Left ventricle myocardium inferior (tissue), 1 donor: ENCODE measurements at regions of chr13 and their contacts with region 1.

Region 1: GRCh38 chr13:51286135-51287002 is 53.1 kb upstream of the SERPINE3 start:
- DNase-seq: peak; percentile 79
- H3K4me3 ChIP-seq: no peak overlapping the region
- H3K27ac ChIP-seq: no peak overlapping the region
- H3K4me1 ChIP-seq: peaks cover 21% of the 10 kb centered on the region
- H3K27me3 ChIP-seq: no peaks in the 10 kb centered on the region
- CTCF ChIP-seq: peak; percentile 97

Region 2: DNA sequence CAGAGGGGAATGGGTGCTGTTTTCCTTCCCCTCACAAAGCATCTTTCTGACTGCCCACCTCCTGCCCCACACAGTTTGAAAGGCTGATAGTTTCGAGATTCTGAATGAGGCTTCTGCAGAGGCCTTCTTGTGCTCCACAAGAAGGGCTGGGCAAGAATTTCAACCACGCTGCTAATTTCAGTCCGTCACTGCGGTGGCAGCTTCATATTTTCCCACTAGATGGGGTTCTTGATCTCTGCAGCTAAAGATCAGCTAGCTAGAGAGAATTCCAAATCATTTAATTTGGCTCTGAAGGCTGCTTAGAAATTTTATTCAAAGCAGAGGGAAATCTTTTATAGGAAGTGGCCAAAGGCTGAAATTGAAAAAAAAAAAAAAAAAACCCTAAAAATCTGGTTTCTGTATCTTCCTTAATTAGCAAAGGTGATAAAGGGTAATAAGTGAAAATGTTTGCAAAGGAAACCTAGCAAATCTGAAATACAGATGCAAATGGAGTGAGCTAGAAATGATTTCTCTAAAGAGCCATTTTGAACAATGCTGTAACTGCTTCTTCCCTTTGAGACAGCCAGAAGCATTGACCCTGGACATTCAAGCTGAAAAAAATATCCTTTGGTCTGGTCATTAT is 137.3 kb before region 1 on chr13:
- intact Hi-C with region 1: loop called (anchors 1 kb)
- DNase-seq: no peak
- H3K4me3 ChIP-seq: no peak overlapping the region
- H3K27ac ChIP-seq: no peak overlapping the region
- H3K4me1 ChIP-seq: peaks cover 4% of the 10 kb centered on the region
- H3K27me3 ChIP-seq: peaks cover 16% of the 10 kb centered on the region
- CTCF ChIP-seq: peak; percentile 74

Region 3: DNA sequence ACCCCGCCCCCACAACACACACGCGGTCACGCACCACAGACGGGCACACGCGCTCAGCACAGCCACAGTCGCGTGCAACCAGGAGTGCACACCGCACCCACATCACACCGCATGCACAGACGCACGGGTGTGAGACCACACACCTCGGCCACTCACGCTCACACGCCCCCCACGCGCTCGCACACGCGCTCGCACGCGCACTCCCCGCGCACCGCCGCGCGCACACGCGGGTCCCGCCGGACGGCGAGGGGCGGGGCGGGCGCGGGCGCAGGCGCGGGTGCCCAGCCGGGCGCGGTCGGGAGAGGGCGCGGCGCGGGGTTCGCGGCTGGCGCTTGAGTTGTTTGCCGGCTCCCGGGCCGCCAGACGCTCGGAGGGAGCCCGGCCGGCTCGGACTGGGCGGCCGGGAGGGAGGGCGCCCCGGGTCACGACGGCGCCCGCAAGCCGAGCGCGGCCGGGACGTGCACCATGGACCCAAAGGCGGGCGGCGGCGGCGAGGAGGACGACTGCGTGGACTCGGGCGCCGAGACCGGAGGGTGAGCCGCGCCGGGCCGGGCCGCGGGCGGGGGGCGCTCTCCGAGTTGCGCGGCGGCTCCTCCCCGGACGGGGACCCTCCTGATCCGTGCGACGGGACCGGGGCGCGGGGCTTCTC is 64.2 kb before region 1 on chr13 and contains the start of gene FAM124A:
- intact Hi-C with region 1: loop called (anchors 10 kb)
- DNase-seq: peak; percentile 50
- H3K4me3 ChIP-seq: peak within 1 kb of the TSS; percentile 98
- H3K27ac ChIP-seq: peak within 1 kb of the TSS; percentile 89
- H3K4me1 ChIP-seq: peaks cover 40% of the 10 kb centered on the region
- H3K27me3 ChIP-seq: no peaks in the 10 kb centered on the region
- CTCF ChIP-seq: peak; percentile 51
- total RNA-seq, gene FAM124A: 5.7 TPM

Region 4: DNA sequence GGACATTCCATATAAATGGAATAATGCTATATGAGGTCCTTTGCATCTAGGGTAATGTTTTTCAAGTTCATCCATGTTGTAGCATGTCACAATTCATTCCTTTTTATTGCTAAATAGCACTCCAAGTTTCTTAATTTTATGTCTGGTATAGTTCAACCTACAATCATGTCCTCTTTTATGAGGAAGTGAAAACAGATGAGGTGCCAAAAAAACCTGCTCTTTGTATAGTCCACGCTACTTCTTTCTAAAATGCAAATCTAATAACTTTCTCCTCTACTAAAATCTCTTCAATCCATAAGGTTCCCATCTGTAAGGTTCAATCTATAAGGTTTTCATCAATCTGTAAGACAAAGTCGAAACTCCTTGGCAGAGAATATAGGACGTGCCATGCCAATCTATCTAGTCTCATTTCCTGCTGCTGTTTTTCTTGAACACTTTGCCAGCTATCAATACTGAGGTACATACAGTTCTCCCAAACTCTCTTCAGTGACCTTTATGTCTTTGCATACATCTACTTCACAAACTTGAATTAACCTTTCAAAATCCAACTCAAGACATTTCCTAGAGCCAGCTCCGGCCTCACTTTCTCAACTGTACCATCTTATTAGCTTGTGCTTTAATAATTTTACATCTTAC is 132.8 kb after region 1 on chr13:
- intact Hi-C with region 1: no loop called
- DNase-seq: no peak
- H3K4me3 ChIP-seq: no peak overlapping the region
- H3K27ac ChIP-seq: no peak overlapping the region
- H3K4me1 ChIP-seq: peaks cover 50% of the 10 kb centered on the region
- H3K27me3 ChIP-seq: no peaks in the 10 kb centered on the region
- CTCF ChIP-seq: no peak